Panc1 (cell line): ENCODE measurements at regions of chr15 and their contacts with region 1.

Region 1: GRCh38 chr15:64246364-64247189 is 83.8 kb upstream of the PPIB start:
- DNase-seq: peak; percentile 96
- ATAC-seq: peak; percentile 74
- H3K4me3 ChIP-seq: peak overlapping the region in 1 of 2 experiments; percentile 6; a peak in 2 of 4 replicates
- H3K27ac ChIP-seq: peak overlapping the region; percentile 84
- H3K4me1 ChIP-seq: peaks cover 54% of the 10 kb centered on the region
- H3K27me3 ChIP-seq: no peaks in the 10 kb centered on the region
- CTCF ChIP-seq: no peak

Region 2: GRCh38 chr15:64232400-64232799 is 14.2 kb before region 1 on chr15:
- CTCF ChIA-PET with region 1: no interaction called
- POLR2A ChIA-PET with region 1: interaction called, 14 read pairs
- in situ Hi-C with region 1: no loop called
- intact Hi-C with region 1: no loop called
- DNase-seq: no peak
- ATAC-seq: no peak
- H3K4me3 ChIP-seq: no peak overlapping the region
- H3K27ac ChIP-seq: no peak overlapping the region
- H3K4me1 ChIP-seq: no peaks in the 10 kb centered on the region; the same call in 1 of the 2 replicates
- H3K27me3 ChIP-seq: no peaks in the 10 kb centered on the region
- CTCF ChIP-seq: no peak

Region 3: DNA sequence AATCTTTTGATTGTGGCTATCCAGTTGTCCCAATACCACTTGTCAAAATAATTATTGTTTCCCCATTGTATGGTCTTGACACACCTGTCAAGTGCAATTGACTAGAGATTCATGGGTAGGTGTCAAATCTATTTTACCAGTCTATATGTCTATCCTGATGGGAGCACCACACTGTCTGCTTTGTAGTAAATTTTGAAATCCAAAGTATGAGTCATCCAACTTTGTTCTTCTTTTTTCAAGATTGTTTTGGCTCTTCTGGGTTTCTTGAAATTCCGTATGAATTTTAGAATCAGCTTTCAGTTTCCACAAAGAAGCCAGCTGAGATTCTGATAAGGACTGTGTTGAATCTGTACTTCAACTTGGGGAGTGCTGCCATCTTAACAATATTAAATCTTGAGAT is 37.5 kb after region 1 on chr15:
- CTCF ChIA-PET with region 1: no interaction called
- POLR2A ChIA-PET with region 1: no interaction called
- in situ Hi-C with region 1: no loop called
- intact Hi-C with region 1: no loop called
- DNase-seq: no peak
- ATAC-seq: no peak
- H3K4me3 ChIP-seq: no peak overlapping the region
- H3K27ac ChIP-seq: no peak overlapping the region
- H3K4me1 ChIP-seq: no peaks in the 10 kb centered on the region
- H3K27me3 ChIP-seq: no peaks in the 10 kb centered on the region
- CTCF ChIP-seq: no peak

Region 4: DNA sequence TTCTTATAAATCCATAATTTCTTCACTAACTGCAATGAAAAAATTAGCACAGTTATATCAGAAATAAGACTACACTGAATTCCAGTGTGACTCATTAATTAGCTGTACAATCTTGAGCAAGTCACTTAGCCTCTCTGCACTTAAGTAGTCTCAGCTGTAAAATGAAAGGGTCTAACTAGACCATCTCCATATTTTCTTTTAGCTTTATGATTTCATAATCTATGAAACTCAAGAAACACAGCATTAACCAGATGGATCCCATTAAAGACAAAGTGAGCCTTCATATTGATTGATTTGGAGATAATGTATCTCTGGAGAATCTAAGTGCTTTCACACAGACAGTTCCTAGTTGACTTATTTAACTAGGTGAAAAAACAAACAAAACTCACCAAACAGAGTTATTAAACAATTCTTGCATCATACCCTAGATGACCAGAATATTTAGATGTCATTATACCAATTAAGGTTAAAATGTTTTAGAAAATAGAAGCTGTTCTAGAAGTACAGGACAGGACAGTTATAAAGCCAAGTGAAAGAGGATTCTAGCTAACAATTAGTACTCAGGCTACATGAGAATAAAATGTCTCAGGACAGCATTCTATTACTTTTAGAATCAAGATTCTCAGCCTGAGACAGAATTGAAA is 98.2 kb after region 1 on chr15:
- CTCF ChIA-PET with region 1: no interaction called
- POLR2A ChIA-PET with region 1: no interaction called
- in situ Hi-C with region 1: no loop called
- intact Hi-C with region 1: no loop called
- DNase-seq: no peak
- ATAC-seq: no peak
- H3K4me3 ChIP-seq: no peak overlapping the region
- H3K27ac ChIP-seq: peak overlapping the region; percentile 9; the same call in 1 of the 2 replicates
- H3K4me1 ChIP-seq: peaks cover 8% of the 10 kb centered on the region; the same call in 1 of the 2 replicates
- H3K27me3 ChIP-seq: no peaks in the 10 kb centered on the region
- CTCF ChIP-seq: no peak

Region 5: GRCh38 chr15:64430000-64430735 is 183.6 kb after region 1 on chr15:
- CTCF ChIA-PET with region 1: interaction called, 10 read pairs
- POLR2A ChIA-PET with region 1: no interaction called
- in situ Hi-C with region 1: no loop called
- intact Hi-C with region 1: no loop called
- DNase-seq: no peak
- ATAC-seq: no peak
- H3K4me3 ChIP-seq: no peak overlapping the region
- H3K27ac ChIP-seq: no peak overlapping the region
- H3K4me1 ChIP-seq: no peaks in the 10 kb centered on the region
- H3K27me3 ChIP-seq: no peaks in the 10 kb centered on the region
- CTCF ChIP-seq: no peak